ENCODE measurements at regions of chr19 and their contacts with region 1.

Region 1: DNA sequence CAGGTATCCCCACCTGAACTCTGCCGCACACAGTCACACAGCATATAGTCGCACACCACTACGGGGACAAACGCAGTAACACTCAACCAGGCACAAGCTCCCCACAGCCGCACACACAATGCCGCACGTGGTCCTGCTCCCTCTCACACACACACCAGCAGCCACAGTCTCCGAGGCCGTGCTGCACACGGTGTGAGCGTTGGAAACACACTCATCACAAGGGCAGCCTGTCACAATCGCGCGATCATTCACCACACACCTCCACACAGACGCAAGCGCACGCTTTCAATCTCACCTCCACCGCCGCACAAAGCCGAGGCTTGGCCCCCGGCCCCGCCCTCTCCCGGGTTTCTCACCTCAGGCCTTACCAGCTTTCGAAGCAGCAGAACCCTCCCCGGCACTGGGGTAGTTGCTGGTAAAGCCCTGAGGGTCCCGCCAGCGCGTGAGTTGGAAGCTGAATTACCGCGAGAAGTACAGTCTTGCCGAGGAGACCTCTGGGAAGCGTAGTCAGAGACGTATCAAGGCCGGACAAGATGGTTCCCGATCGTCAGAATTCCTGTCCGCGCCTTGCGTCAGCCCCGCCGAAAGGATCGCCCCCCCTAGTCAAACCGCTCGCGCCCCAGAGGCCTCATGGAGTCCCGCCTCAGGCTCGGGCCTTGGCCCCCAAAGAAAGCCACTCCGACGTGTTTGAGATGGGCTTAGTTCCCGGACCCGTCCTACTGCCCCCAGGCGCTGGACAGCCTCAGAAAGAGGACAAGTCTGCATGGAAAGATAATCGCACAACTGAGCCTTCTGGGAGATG is at the start of gene ZNF566:
- DNase-seq: peak; percentile 88
- ATAC-seq: peak; percentile 93
- H3K4me3 Mint-ChIP-seq: peak within 1 kb of the TSS; percentile 98
- H3K27ac Mint-ChIP-seq: peak within 1 kb of the TSS; percentile 98
- H3K4me1 Mint-ChIP-seq: peaks cover 23% of the 10 kb centered on the region
- H3K27me3 Mint-ChIP-seq: no peaks in the 10 kb centered on the region
- total RNA-seq, gene ZNF566: 14.1 TPM

Region 2: GRCh38 chr19:36214386-36215275 is 274.7 kb before region 1 on chr19 and contains the starts of genes ZNF146 and ZNF565:
- POLR2A ChIA-PET with region 1: interaction called, 14 read pairs
- DNase-seq: peak; percentile 95
- ATAC-seq: peak; percentile 91
- H3K4me3 Mint-ChIP-seq: no peak within 1 kb of the TSS
- H3K27ac Mint-ChIP-seq: no peak within 1 kb of the TSS
- H3K4me1 Mint-ChIP-seq: peaks cover 15% of the 10 kb centered on the region
- H3K27me3 Mint-ChIP-seq: no peaks in the 10 kb centered on the region
- total RNA-seq, gene ZNF146: 71.9 to 75.1 TPM
- total RNA-seq, gene ZNF565: 4.2 to 5.2 TPM

Region 3: GRCh38 chr19:36418287-36419001 is 70.9 kb before region 1 on chr19 and contains the start of gene ZFP82:
- POLR2A ChIA-PET with region 1: interaction called, 10 read pairs
- DNase-seq: peak; percentile 88
- ATAC-seq: peak; percentile 94
- H3K4me3 Mint-ChIP-seq: peak within 1 kb of the TSS; percentile 93
- H3K27ac Mint-ChIP-seq: peak within 1 kb of the TSS; percentile 97
- H3K4me1 Mint-ChIP-seq: peaks cover 19% of the 10 kb centered on the region
- H3K27me3 Mint-ChIP-seq: peaks cover 7% of the 10 kb centered on the region
- total RNA-seq, gene ZFP82: 8.3 to 10.8 TPM

Region 4: GRCh38 chr19:36436531-36436930 is 52.8 kb before region 1 on chr19:
- POLR2A ChIA-PET with region 1: no interaction called
- DNase-seq: no peak
- ATAC-seq: no peak
- H3K4me3 Mint-ChIP-seq: no peak overlapping the region
- H3K27ac Mint-ChIP-seq: no peak overlapping the region
- H3K4me1 Mint-ChIP-seq: no peaks in the 10 kb centered on the region
- H3K27me3 Mint-ChIP-seq: no peaks in the 10 kb centered on the region

Region 5: DNA sequence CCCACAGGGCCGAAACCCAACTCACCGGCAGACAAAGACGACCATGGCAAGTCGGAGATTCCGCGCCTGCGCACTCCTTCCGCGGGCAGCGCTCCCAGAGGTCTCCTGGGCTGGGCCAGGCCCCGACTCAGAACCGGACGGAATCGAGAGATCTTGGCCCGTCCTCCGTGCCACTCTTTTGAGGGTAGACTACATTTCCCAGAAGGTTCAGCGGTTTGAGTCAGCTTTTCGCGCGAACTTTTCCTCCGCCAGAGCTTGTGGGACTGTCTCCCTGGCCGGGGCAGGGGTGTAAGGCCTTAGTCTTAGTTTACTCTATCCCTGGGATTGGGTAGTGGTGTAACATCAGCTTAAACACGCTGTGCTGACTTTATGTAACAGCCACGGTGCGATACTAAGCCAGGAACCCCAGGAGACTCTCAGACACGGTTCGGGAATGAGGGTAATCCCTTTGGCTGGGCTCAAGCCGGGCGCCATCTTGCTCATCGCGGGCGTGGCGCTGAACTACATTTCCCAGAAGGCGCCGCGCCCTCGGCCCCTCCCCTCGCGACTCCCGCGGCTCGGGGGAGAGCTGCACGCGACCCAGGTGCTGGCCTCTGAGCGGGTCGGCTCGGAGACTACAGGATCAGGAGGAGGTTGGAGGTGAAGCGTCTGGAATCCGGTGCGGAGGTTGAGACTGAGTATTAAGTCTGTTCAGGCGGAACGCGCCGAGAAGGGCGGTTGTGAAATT is 39.0 kb after region 1 on chr19 and contains the start of gene ZNF260:
- POLR2A ChIA-PET with region 1: interaction called, 28 read pairs
- DNase-seq: peak; percentile 94
- ATAC-seq: peak; percentile 88
- H3K4me3 Mint-ChIP-seq: peak within 1 kb of the TSS; percentile 99
- H3K27ac Mint-ChIP-seq: peak within 1 kb of the TSS; percentile 99
- H3K4me1 Mint-ChIP-seq: peaks cover 16% of the 10 kb centered on the region
- H3K27me3 Mint-ChIP-seq: no peaks in the 10 kb centered on the region
- total RNA-seq, gene ZNF260: 12.9 to 16.3 TPM

Region 6: DNA sequence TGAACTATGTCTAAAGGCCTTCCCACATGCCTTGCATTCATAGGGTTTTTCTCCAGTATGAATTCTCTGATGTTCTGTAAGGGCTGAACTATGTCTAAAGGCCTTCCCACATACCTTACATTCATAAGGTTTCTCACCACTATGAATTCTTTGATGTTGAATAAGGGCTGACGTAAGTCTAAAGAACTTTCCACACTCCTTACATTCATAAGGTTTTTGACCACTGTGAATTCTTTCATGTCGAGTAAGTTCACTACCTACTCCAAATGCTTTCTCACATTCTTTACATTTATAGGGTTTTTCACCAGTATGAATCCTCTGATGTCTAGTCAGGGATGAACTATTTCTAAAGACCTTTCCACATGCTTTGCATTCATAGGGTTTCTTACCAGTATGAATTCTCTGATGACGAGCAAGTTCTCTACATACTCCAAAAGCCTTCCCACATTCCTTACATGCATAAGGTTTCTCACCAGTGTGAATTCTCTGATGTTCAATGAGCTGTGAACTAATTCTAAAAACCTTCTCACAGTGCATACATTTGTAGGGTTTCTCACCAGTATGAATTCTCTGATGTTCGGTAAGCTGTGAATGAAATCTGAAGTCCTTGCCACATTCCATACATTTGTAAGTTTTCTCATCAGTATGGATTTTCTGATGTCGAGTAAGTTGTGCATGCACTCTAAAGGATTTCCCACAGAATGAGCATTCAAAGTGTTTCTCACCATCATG is 57.8 kb after region 1 on chr19:
- POLR2A ChIA-PET with region 1: no interaction called
- DNase-seq: no peak
- ATAC-seq: no peak
- H3K4me3 Mint-ChIP-seq: no peak overlapping the region
- H3K27ac Mint-ChIP-seq: no peak overlapping the region
- H3K4me1 Mint-ChIP-seq: no peaks in the 10 kb centered on the region
- H3K27me3 Mint-ChIP-seq: no peaks in the 10 kb centered on the region

Region 7: DNA sequence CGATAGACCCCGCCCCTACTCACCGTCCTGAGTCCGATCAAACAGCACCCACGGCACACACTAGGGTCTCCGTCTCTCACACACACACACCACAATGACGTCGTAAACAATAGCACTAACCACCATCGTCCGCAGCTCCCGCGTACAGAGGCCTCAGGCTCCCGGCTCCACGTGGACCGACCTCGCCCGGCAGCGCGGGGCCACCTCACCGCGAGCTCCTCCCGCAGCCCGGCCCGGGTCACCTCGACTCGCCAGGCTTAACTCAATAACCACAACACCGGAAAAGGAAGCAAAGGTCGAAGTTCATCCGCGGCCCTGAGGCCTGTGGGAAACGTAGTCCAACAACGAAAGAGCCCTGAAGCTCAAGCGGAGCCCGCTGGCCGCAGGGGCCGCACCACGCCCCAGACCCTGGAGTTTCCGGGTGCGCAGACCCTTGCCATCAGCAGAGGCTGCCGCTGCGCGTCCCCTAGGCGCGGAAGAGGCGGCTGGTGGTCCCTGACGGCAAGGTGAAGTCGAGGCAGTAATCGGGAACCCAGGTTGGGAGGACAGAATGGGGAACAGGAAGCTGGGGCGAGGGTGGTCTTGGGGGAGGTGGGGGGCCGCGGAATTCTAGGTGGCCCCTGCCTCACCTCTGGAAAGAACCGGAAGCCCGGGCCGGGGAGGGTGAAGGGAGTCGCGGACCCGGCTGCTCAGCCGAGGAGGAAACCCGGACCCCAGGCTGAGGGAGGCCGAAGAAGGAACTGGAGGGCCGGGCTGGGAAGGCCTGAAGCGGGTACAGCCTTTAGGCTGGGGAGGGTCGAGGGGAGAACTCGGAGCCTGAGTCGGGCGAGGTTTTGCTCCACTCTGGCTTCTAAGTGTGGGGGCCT is 83.9 kb after region 1 on chr19 and contains the start of gene ZNF529:
- POLR2A ChIA-PET with region 1: interaction called, 16 read pairs
- DNase-seq: peak; percentile 86
- ATAC-seq: peak; percentile 84
- H3K4me3 Mint-ChIP-seq: peak within 1 kb of the TSS; percentile 91
- H3K27ac Mint-ChIP-seq: peak within 1 kb of the TSS; percentile 97
- H3K4me1 Mint-ChIP-seq: peaks cover 26% of the 10 kb centered on the region
- H3K27me3 Mint-ChIP-seq: no peaks in the 10 kb centered on the region
- total RNA-seq, gene ZNF529: 21.6 to 24.2 TPM

Region 8: DNA sequence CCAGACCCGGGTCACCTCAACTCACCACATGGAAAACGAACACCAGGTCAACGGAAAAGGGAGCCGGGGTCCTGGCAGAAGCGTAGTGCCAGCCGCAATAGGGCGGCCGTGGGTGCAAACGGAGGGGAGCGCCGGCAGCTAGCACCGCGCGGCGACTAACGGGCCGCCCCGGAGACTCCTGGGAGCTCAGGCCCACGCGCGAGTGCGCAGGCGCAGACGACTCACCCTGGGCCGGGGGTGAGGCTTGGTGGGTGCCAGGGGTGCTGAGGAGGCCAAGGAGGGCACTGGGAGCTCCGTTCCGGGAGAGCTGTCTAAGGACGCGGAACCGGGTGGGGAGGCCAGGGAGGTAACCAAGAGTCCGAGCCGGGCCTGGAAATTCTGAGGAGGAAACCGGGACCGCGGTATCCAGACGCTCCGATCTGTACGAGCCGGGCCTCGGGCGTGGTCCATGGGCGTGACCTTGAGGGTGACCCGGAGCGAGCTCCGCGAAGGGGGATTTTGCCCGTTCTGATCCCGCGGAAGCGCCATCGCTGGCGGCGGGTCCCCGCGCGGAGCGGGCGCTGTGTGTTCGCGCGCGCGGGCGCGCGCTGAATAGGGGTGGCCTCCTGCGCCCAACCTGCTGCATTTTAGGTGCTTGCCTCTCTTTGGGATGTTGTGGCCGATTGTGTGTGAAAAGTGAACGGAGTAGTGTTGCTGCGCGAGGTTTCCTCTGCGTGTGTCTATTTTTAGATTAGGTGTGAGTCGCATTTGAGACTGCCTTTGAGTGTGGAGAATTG is 116.0 kb after region 1 on chr19 and contains the start of gene ZNF382:
- POLR2A ChIA-PET with region 1: interaction called, 20 read pairs
- DNase-seq: peak; percentile 92
- ATAC-seq: peak; percentile 84
- H3K4me3 Mint-ChIP-seq: peak within 1 kb of the TSS; percentile 82
- H3K27ac Mint-ChIP-seq: peak within 1 kb of the TSS; percentile 91
- H3K4me1 Mint-ChIP-seq: peaks cover 15% of the 10 kb centered on the region
- H3K27me3 Mint-ChIP-seq: no peaks in the 10 kb centered on the region
- total RNA-seq, gene ZNF382: 15.6 to 16.2 TPM

Region 9: GRCh38 chr19:36672368-36672767 is 183.0 kb after region 1 on chr19:
- POLR2A ChIA-PET with region 1: no interaction called
- DNase-seq: no peak
- ATAC-seq: no peak
- H3K4me3 Mint-ChIP-seq: no peak overlapping the region
- H3K27ac Mint-ChIP-seq: no peak overlapping the region
- H3K4me1 Mint-ChIP-seq: peaks cover 5% of the 10 kb centered on the region
- H3K27me3 Mint-ChIP-seq: no peaks in the 10 kb centered on the region